Psoas muscle (tissue), 8 donors: ENCODE measurements at regions of chr1 and their contacts with region 1.

Region 1: GRCh38 chr1:183101841-183102276 is 78.6 kb downstream of the LAMC1 start:
- DNase-seq: peak in 1 of 2 donors; percentile 25
- ATAC-seq: peak; percentile 2 to 38 (median 24)
- H3K4me3 ChIP-seq: no peak overlapping the region
- H3K27ac ChIP-seq: peak overlapping the region; percentile 84
- H3K4me1 ChIP-seq: peaks cover 74% of the 10 kb centered on the region
- H3K27me3 ChIP-seq: no peaks in the 10 kb centered on the region
- CTCF ChIP-seq: no peak

Region 2: GRCh38 chr1:183023601-183024316 is 78.1 kb before region 1 on chr1:
- intact Hi-C with region 1: loop called (anchors 5 kb)
- DNase-seq: peak; percentile 65 to 83
- ATAC-seq: peak; percentile 55 to 63 (median 59)
- H3K4me3 ChIP-seq: peak overlapping the region; percentile 89
- H3K27ac ChIP-seq: peak overlapping the region; percentile 100
- H3K4me1 ChIP-seq: peaks cover 55% of the 10 kb centered on the region
- H3K27me3 ChIP-seq: no peaks in the 10 kb centered on the region
- CTCF ChIP-seq: peak; percentile 51

Region 3: DNA sequence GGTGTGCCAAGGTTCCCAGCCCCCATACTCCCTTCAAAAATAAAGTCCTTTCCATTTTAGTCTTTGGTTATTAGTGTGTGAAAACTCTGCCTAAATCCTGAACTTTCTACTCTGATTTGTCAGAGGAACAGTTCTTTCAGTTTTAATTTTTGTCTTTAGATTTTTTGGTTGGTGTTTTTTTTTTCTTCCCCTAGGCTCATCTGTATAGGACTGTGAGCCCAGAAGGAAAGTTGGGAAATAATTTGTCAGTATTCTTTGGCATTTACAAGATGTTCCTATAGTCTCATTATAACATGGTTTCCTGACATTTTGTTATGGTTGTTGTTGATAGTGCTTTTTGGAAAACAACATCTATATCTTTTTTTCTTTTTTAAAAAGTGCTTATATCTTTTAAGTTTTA is 40.7 kb before region 1 on chr1:
- intact Hi-C with region 1: loop called in 1 of 2 experiments (anchors 5 kb)
- DNase-seq: no peak
- ATAC-seq: no peak
- H3K4me3 ChIP-seq: no peak overlapping the region
- H3K27ac ChIP-seq: no peak overlapping the region
- H3K4me1 ChIP-seq: peaks cover 74% of the 10 kb centered on the region
- H3K27me3 ChIP-seq: no peaks in the 10 kb centered on the region
- CTCF ChIP-seq: no peak